ENCODE measurements at regions of chr10 and their contacts with region 1.

Region 1: GRCh38 chr10:86755740-86756510 is 494 bp upstream of the BMPR1A start:
- DNase-seq: peak; percentile 81 to 93
- ATAC-seq: peak; percentile 86 to 92 (median 89)
- H3K4me3 ChIP-seq: peak overlapping the region; percentile 33 to 90 (median 77)
- H3K27ac ChIP-seq: peak overlapping the region; percentile 89 to 99 (median 98)
- H3K4me1 ChIP-seq: peaks cover 0 to 60% (median 41%) of the 10 kb centered on the region in 9 donors
- H3K27me3 ChIP-seq: peaks cover 0 to 78% (median 59%) of the 10 kb centered on the region in 7 donors
- CTCF ChIP-seq: peak in 1 of 9 donors; percentile 24

Region 2: DNA sequence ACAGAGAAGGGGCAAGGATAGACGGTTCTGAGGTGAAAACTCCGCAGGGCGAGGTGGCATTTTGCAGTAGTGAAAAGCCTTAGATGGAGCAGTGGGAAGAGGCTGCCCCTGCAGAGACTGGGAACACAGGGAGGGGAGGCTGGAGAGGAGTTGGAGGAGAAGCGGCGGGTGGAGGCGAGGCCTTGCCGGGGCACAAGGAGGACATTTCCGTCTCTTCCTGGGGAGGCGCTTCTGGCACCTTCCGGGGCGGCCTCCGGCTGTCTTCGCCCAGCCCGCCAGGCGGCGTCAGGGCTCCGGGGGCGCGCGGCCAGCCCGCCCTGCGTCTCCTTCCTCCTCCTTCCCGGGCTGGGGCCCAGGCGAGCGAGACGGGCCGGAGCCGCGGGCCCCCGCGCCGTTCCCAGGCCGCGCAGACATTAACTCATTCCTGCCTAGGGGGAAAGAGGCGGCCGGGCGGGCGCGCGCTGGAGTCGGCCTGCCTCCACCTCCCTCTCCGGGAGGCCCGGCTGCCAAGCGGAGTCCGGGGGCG is 44.9 kb before region 1 on chr10:
- intact Hi-C with region 1: loop called in 2 of 10 experiments (anchors 5 kb)
- DNase-seq: peak; percentile 84 to 91
- ATAC-seq: peak; percentile 65 to 87 (median 76)
- H3K4me3 ChIP-seq: peak overlapping the region; percentile 22 to 84 (median 65)
- H3K27ac ChIP-seq: peak overlapping the region; percentile 79 to 97 (median 93)
- H3K4me1 ChIP-seq: peaks cover 15 to 76% (median 36%) of the 10 kb centered on the region in 9 donors
- H3K27me3 ChIP-seq: peaks cover 0 to 44% (median 14%) of the 10 kb centered on the region in 7 donors
- CTCF ChIP-seq: peak; percentile 66 to 94 (median 86)

Region 3: DNA sequence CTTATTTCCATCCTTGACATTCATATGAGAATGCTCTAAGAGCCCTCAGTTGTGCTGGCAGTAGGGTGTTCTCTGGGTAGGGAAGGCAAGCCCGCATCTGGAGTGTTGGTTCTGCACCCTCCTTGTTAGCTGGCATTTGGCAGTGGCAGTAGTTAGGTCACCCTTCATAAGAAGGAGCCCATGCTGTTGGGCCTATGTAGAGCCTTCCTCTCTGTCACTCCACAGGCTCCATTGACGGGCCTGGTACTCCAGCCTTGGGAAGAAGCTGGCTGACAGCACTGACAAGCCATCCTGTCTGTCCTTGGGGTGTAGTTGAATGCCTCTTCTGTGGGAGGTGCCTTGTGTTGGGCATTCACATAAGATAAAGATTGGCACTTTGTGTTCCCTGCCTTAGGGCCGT is 90.2 kb after region 1 on chr10:
- intact Hi-C with region 1: no loop called
- DNase-seq: no peak
- ATAC-seq: peak in 7 of 8 donors; percentile 35 to 69 (median 50)
- H3K4me3 ChIP-seq: no peak overlapping the region
- H3K27ac ChIP-seq: peak overlapping the region in 1 of 10 donors; percentile 44
- H3K4me1 ChIP-seq: peaks cover 0 to 20% (median 0%) of the 10 kb centered on the region in 9 donors
- H3K27me3 ChIP-seq: peaks cover 0 to 3% (median 0%) of the 10 kb centered on the region in 7 donors
- CTCF ChIP-seq: no peak

Region 4: GRCh38 chr10:86888585-86889381 is 132.9 kb after region 1 on chr10:
- intact Hi-C with region 1: loop called in 3 of 10 experiments (anchors 5 to 10 kb)
- DNase-seq: no peak
- ATAC-seq: peak; percentile 68 to 90 (median 84)
- H3K4me3 ChIP-seq: no peak overlapping the region
- H3K27ac ChIP-seq: peak overlapping the region; percentile 34 to 83 (median 75)
- H3K4me1 ChIP-seq: peaks cover 0 to 36% (median 16%) of the 10 kb centered on the region in 9 donors
- H3K27me3 ChIP-seq: peaks cover 0 to 5% (median 0%) of the 10 kb centered on the region in 7 donors
- CTCF ChIP-seq: no peak

Measured in heart right ventricle (tissue), 16 donors.